ENCODE measurements at regions of chr10 and their contacts with region 1.

Region 1: DNA sequence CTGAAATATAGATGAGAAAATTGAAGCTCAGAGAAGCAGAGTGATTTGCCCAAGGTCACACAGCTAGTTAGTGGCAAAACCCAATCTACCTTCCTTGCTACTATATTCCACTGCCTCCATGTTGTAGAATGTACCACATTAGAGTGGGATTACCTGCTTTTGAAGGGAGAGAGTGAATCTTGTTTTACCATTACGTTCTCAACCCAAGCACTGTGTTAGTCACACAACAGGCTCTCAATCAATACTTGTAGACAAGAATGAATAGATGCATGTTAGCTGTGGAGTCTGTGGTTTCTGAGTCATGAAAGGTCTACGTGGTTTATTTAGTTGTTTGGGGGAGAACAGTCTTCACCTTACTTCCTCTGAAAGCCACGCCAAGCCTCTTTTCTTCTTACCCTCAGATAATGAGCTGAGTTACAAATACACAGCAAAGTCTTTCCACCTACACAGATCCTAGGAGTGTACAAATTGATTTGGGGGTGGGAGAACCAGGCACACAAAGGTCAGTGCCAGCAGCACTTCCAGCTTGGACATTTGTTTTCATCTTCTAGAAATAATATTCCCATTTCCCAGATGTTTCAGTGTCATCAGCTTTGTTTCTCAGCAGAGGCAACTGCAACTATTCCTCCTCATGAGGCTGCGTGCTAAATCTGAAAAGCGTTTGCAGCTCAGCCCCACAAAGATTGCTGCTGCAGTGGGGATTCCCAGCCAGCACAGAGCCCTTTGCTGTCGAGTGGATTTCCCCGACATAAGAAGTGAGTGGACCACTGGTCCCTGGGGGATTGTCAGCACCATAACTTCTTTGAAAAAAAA is 71.5 kb upstream of the ADO start:
- DNase-seq: peak in 8 of 9 donors; percentile 54 to 83 (median 76)
- ATAC-seq: peak; percentile 92
- H3K4me3 ChIP-seq: no peak overlapping the region
- H3K4me3 Mint-ChIP-seq: peak overlapping the region in 7 of 10 donors; percentile 14 to 72 (median 65)
- H3K27ac ChIP-seq: peak overlapping the region; percentile 22
- H3K27ac Mint-ChIP-seq: peak overlapping the region in 2 of 9 donors; percentile 78 to 85
- H3K4me1 ChIP-seq: peaks cover 24 to 49% of the 10 kb centered on the region in 2 donors
- H3K4me1 Mint-ChIP-seq: peaks cover 0 to 17% (median 0%) of the 10 kb centered on the region in 7 donors
- H3K27me3 ChIP-seq: no peaks in the 10 kb centered on the region
- H3K27me3 Mint-ChIP-seq: peaks cover 0 to 14% (median 0%) of the 10 kb centered on the region in 5 donors

Region 2: GRCh38 chr10:62528441-62528840 is 204.6 kb before region 1 on chr10:
- CTCF ChIA-PET with region 1: no interaction called
- POLR2A ChIA-PET with region 1: no interaction called
- intact Hi-C with region 1: loop called (anchors 5 kb)
- DNase-seq: peak in 7 of 9 donors; percentile 42 to 83 (median 78)
- ATAC-seq: peak; percentile 95
- H3K4me3 ChIP-seq: no peak overlapping the region
- H3K4me3 Mint-ChIP-seq: peak overlapping the region; percentile 0 to 78 (median 70)
- H3K27ac ChIP-seq: peak overlapping the region; percentile 44
- H3K27ac Mint-ChIP-seq: peak overlapping the region; percentile 47 to 86 (median 75)
- H3K4me1 ChIP-seq: peaks cover 24 to 39% of the 10 kb centered on the region in 2 donors
- H3K4me1 Mint-ChIP-seq: peaks cover 32 to 49% (median 43%) of the 10 kb centered on the region in 7 donors
- H3K27me3 ChIP-seq: no peaks in the 10 kb centered on the region
- H3K27me3 Mint-ChIP-seq: peaks cover 0 to 15% (median 0%) of the 10 kb centered on the region in 5 donors

Region 3: DNA sequence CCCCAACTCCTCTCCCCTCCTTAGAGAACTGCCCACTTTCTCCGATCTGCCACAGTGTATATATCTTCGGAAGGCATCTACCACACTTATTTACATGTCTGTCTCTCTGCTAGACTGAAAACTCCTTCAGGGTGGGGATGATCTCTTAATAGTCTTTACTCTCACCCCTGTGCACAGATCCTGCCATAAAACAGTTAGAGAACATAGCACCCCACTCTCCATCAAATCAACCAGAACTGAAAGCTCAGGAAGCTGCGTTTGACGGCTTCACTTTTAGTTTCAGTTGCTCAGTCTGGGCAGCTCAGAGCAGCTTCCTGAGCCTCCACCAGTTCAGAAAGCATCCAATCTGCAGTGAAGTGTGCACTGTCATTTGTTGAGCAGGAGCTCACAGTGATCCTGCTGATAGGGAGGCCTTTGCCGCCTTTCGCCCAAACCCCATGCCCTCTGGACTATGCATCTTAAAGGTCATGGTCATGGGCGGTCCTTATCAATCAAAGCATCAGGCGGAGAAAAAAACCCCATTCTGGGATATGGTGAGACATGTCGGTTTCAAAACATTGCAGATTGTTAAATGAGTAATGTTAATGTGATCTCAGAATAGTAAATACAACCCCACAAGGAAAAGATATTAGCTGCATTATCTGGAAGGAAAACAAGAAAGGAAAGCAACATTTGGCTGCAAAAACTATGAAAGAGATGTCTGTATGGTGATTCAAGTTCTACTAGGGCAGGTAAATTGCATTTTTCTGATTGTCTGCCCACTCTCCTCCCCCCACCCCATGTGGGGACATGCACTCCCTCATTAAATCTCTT is 95.6 kb before region 1 on chr10:
- CTCF ChIA-PET with region 1: interaction called, 4 read pairs
- POLR2A ChIA-PET with region 1: interaction called, 11 read pairs
- intact Hi-C with region 1: loop called (anchors 1 kb)
- DNase-seq: peak; percentile 32 to 82 (median 75)
- ATAC-seq: peak; percentile 86
- H3K4me3 ChIP-seq: peak overlapping the region; percentile 67
- H3K4me3 Mint-ChIP-seq: no peak overlapping the region
- H3K27ac ChIP-seq: peak overlapping the region; percentile 70
- H3K27ac Mint-ChIP-seq: no peak overlapping the region
- H3K4me1 ChIP-seq: peaks cover 18 to 41% of the 10 kb centered on the region in 2 donors
- H3K4me1 Mint-ChIP-seq: peaks cover 2 to 38% (median 6%) of the 10 kb centered on the region in 7 donors
- H3K27me3 ChIP-seq: no peaks in the 10 kb centered on the region
- H3K27me3 Mint-ChIP-seq: no peaks in the 10 kb centered on the region

Region 4: DNA sequence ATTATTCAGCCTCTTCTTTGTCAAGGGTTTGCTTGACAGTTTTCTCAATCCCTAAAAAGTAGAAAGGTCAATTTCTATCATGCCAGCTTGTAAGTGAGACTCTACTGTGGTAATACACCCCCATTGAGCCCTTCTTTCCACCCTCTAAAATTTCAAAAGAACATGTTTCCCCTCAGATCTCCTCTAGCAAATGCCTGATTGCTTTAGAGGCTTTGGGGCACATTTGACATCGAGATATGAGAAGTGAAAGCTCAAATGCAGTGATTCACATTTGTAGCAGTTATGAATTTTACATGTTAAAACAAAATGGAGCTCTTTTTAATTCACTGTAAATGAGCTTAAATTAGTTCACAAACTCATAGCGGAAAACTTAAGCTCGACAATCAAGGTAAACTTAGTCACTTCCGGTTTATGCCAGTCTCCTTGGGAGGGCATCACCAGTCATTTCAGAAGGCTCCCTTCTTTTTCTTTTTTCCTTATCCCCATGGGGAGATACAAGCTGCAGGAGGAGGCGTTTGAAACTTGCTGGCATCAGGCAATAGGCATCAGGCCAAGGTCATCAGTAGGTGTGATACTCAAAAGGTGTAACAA is 16.1 kb after region 1 on chr10:
- CTCF ChIA-PET with region 1: no interaction called
- POLR2A ChIA-PET with region 1: interaction called, 3 read pairs
- intact Hi-C with region 1: loop called (anchors 1 to 2 kb)
- DNase-seq: no peak
- ATAC-seq: no peak
- H3K4me3 ChIP-seq: no peak overlapping the region
- H3K4me3 Mint-ChIP-seq: no peak overlapping the region
- H3K27ac ChIP-seq: no peak overlapping the region
- H3K27ac Mint-ChIP-seq: no peak overlapping the region
- H3K4me1 ChIP-seq: peaks cover 3 to 10% of the 10 kb centered on the region in 2 donors
- H3K4me1 Mint-ChIP-seq: peaks cover 7 to 16% (median 13%) of the 10 kb centered on the region in 7 donors
- H3K27me3 ChIP-seq: no peaks in the 10 kb centered on the region
- H3K27me3 Mint-ChIP-seq: peaks cover 0 to 8% (median 0%) of the 10 kb centered on the region in 5 donors

Region 5: GRCh38 chr10:62804356-62805230 is 71.5 kb after region 1 on chr10 and contains the start of gene ADO:
- CTCF ChIA-PET with region 1: no interaction called
- POLR2A ChIA-PET with region 1: interaction called, 4 read pairs
- intact Hi-C with region 1: loop called (anchors 1 kb)
- DNase-seq: peak; percentile 69 to 86 (median 80)
- ATAC-seq: peak; percentile 93
- H3K4me3 ChIP-seq: peak within 1 kb of the TSS; percentile 66
- H3K4me3 Mint-ChIP-seq: peak within 1 kb of the TSS; percentile 90 to 100 (median 96)
- H3K27ac ChIP-seq: peak within 1 kb of the TSS; percentile 86
- H3K27ac Mint-ChIP-seq: peak within 1 kb of the TSS; percentile 93 to 100 (median 98)
- H3K4me1 ChIP-seq: peaks cover 15 to 19% of the 10 kb centered on the region in 2 donors
- H3K4me1 Mint-ChIP-seq: peaks cover 22 to 47% (median 39%) of the 10 kb centered on the region in 7 donors
- H3K27me3 ChIP-seq: no peaks in the 10 kb centered on the region
- H3K27me3 Mint-ChIP-seq: peaks cover 0 to 20% (median 0%) of the 10 kb centered on the region in 5 donors
- total RNA-seq, gene ADO: 9.8 to 21.3 (median 15.6) TPM